Sigmoid colon (tissue), 7 donors: ENCODE measurements at regions of chr6 and their contacts with region 1.

Region 1: GRCh38 chr6:44049163-44049988 is 77.9 kb downstream of the MRPL14 start:
- DNase-seq: peak; percentile 85
- H3K4me3 ChIP-seq: no peak overlapping the region
- H3K27ac ChIP-seq: peak overlapping the region; percentile 81 to 91 (median 84)
- H3K4me1 ChIP-seq: peaks cover 0 to 82% (median 69%) of the 10 kb centered on the region in 4 donors
- H3K27me3 ChIP-seq: no peaks in the 10 kb centered on the region
- CTCF ChIP-seq: no peak
- EP300 ChIP-seq: peak in 1 of 4 donors; percentile 37
- POLR2A ChIP-seq: no peak

Region 2: GRCh38 chr6:43972913-43973300 is 76.5 kb before region 1 on chr6:
- intact Hi-C with region 1: loop called (anchors 5 kb)
- DNase-seq: peak; percentile 91
- H3K4me3 ChIP-seq: no peak overlapping the region
- H3K27ac ChIP-seq: peak overlapping the region; percentile 73 to 86 (median 78)
- H3K4me1 ChIP-seq: peaks cover 0 to 34% (median 31%) of the 10 kb centered on the region in 4 donors
- H3K27me3 ChIP-seq: no peaks in the 10 kb centered on the region
- CTCF ChIP-seq: no peak
- EP300 ChIP-seq: no peak
- POLR2A ChIP-seq: no peak